GM10248 (cell line): ENCODE measurements at regions of chr18 and their contacts with region 1.

Region 1: GRCh38 chr18:46073474-46074331 is 1.6 kb upstream of the PSTPIP2 start:
- DNase-seq: peak; percentile 55
- CTCF ChIP-seq: peak; percentile 62

Region 2: GRCh38 chr18:45621061-45621511 is 452.6 kb before region 1 on chr18:
- CTCF ChIA-PET with region 1: interaction called, 11 read pairs
- POLR2A ChIA-PET with region 1: no interaction called
- DNase-seq: peak; percentile 69
- CTCF ChIP-seq: peak; percentile 80

Region 3: GRCh38 chr18:45690975-45691815 is 382.5 kb before region 1 on chr18:
- CTCF ChIA-PET with region 1: interaction called, 31 read pairs
- POLR2A ChIA-PET with region 1: interaction called, 3 read pairs
- DNase-seq: peak; percentile 72
- CTCF ChIP-seq: peak; percentile 86

Region 4: DNA sequence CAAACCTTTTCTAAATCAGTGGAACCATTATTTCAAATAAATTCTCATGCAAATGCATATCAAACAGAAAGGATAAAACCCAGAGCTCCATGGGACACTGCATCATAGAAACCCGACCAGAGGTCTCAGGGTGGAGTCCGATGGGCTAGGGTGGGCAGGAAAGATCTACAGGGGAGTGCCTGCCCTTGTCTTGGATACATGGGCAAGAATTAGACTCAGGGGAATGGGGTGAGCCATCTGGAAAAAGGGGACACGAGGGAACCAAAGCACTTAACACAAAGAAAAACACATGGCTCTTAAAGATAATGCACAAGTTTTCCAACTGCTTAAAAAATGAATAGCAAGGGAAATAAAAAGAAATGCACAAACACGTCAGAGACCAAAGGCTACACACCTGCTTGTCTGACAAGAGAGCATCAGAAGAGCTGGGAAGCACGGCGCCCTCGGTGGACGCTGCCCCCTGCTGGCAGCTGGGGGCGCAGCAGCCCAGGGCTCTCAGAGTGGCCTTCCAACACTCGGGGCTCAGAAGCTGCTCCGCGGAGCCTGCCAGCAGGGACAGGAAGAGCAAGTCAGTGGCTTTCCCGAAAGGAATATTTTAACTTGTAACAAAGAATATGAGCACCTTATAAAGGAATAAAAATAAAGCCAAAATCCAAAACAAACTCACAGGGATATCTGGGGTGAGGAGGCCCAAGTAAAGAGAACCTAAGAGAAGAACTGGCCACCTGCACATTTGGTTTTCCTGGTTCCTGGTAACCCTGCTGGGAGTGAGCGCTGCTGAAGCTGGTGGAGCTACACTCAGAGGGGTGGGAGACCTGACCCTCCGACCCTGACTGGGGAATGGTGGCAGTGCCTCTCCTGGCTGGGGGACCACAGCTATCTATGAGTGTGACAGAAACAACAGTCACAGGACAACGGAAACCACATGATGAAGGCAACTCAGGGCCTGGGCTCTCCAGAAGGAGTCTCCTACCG is 193.7 kb before region 1 on chr18:
- CTCF ChIA-PET with region 1: interaction called, 29 read pairs
- POLR2A ChIA-PET with region 1: no interaction called
- DNase-seq: peak; percentile 79
- CTCF ChIP-seq: peak; percentile 99

Region 5: DNA sequence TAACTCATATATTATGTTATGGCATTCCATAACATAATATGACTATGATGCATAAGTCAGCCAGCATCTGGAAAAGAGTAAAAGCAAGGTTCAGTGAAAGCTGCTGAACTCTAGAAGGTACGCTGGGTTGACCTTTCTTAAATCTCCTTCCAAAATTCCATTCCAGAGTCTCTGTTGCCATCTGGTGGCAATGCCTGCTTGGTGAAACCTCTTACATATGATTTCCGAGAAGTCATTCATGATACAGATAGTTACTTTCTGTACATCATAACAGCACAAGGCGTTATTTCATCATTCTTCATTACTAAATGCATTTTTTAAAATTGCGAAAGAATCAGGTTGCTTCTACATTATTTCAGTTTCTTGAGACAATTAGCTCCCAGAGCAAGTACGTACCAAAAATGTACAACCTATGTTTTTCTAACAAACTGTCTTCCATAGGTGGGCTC is 99.6 kb before region 1 on chr18:
- CTCF ChIA-PET with region 1: interaction called, 32 read pairs
- POLR2A ChIA-PET with region 1: no interaction called
- DNase-seq: peak; percentile 28
- CTCF ChIP-seq: peak; percentile 63

Region 6: GRCh38 chr18:46054956-46055837 is 18.5 kb before region 1 on chr18:
- CTCF ChIA-PET with region 1: interaction called, 18 read pairs
- POLR2A ChIA-PET with region 1: no interaction called
- DNase-seq: no peak
- CTCF ChIP-seq: no peak

Region 7: GRCh38 chr18:46084431-46084830 is 10.7 kb after region 1 on chr18:
- CTCF ChIA-PET with region 1: interaction called, 24 read pairs
- POLR2A ChIA-PET with region 1: interaction called, 3 read pairs
- DNase-seq: no peak
- CTCF ChIP-seq: no peak

Region 8: DNA sequence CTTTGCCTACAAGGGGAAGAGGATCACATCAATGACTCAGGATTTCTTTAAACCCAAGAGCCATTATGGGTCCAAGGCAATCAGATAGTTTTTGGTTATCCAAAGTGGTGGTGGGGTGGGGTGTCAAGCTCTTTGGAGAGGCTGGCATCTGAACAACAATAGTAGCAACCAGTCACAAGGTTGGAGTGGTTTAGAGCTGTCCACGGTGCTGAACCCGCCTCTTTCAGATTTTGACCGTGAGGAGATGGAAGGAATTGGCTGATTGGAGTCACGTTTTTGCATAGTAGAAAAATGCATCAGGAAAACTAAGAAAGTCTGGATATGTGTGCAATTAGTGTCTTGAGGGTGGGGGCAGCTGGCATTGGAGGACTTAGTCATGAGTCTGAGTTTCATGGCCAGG is 423.4 kb after region 1 on chr18:
- CTCF ChIA-PET with region 1: no interaction called
- POLR2A ChIA-PET with region 1: no interaction called
- DNase-seq: no peak
- CTCF ChIP-seq: no peak